HepG2 (cell line): ENCODE measurements at regions of chr5 and their contacts with region 1.

Region 1: DNA sequence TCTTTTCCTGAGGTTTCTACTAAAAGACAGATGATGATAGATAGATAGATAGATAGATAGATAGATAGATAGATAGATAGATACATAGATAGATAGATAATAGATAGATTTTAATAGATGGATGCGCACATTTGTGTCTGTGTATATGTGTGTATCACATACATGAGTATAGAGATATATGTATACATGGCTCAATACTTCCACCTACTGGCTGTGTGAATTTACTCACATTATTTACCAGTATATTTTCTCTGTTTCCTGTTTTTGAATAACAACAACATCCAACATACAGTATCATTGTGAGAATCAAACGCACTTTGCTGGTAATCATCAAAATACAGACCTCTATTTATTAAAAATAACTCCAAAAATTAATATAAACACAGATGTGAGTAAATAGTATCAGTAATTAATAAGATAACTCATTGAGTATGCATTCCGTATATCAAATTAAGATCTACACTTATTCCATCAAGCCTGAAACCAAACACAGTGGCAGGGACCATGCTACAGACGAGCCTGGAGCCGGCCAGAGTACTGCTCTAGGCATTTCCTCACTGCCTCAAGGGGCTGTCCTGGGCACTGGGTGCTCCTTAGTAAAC is 338.0 kb downstream of the SEMA5A start:
- DNase-seq: peak; percentile 34
- ATAC-seq: peak; percentile 72; the same call in 2 of the 3 replicates
- H3K4me3 ChIP-seq: no peak overlapping the region
- H3K27ac ChIP-seq: no peak overlapping the region
- H3K4me1 ChIP-seq: no peaks in the 10 kb centered on the region
- H3K27me3 ChIP-seq: no peaks in the 10 kb centered on the region
- CTCF ChIP-seq: peak; percentile 60
- EP300 ChIP-seq: no peak
- POLR2A ChIP-seq: no peak
- RAD21 ChIP-seq: no peak

Region 2: DNA sequence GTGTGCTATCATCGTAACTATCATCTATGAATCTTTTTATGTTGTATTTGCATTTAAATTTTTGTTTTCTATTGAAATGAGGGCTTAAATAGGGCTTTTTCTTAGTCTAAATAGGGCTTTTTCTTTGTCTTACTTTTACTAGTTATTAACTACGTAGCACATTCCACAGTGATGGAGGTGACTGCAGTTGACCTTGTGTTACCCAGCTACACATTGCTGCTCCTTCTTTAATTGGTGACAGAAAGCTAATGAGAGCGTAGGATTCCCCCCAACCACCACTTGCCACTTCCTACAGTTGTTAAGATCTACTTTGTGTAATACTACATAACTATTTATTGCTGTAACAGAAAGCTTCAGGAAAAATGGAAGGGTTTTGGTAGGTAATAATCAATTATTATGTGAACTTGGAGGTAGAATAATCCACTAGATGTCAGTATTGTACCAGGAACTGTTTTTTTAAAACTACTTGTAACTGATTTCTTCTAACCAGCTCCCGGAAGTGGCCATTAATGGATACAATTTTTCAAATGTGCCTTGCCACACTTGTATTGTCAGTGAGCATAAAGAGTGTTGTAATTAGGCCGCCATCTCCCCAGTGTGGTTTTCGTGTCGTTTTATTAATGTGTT is 1321.0 kb before region 1 on chr5:
- CTCF ChIA-PET with region 1: no interaction called
- POLR2A ChIA-PET with region 1: no interaction called
- in situ Hi-C with region 1: no loop called
- intact Hi-C with region 1: loop called (anchors 5 kb)
- DNase-seq: peak; percentile 20
- ATAC-seq: peak; percentile 35; the same call in 1 of the 3 replicates
- H3K4me3 ChIP-seq: no peak overlapping the region
- H3K27ac ChIP-seq: no peak overlapping the region
- H3K4me1 ChIP-seq: no peaks in the 10 kb centered on the region
- H3K27me3 ChIP-seq: no peaks in the 10 kb centered on the region
- CTCF ChIP-seq: peak; percentile 42
- EP300 ChIP-seq: no peak
- POLR2A ChIP-seq: no peak
- RAD21 ChIP-seq: no peak; the same call in 1 of the 2 replicates

Region 3: DNA sequence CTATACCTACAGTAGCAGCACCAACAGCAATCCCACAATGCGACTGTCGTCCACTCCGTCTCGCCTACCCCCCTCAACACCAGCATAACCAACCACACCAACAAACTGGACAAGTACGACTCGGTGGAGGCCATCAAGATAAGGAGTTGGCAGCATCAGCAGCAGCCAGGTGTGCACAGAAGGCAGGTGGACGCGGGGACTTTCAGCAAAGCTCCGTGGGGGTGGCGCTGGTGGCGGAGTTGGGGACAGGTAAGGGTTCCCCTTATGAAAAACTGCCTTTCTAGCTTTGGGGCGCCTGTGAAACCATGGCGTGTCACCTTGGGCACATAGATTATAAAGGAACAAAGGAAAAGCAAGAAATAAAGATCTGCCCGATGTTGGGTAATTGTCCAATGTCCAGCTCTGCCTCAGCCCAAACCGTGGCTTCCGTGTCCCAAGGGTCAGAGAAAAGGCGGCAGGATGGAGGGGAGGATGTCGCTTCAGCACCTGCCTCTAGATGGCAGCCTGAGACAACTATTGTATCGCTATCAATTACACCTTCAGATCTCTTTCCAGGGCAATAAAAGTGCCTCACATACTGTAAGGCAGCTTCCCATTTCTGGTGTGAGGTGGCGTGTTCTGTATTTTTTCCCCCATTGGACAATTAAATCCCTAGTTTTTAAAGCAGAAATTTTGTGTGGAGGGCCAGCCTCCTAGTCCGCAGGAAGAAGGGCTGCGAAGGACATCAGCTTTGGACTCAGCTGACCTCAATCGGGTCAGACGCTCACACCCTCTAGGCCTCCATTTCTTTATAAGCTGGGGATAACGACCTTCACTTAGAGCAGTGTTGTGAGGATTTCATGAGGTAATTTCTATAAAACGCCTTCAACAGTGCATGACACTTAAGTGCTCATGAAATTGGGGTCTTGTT is 1280.2 kb before region 1 on chr5:
- CTCF ChIA-PET with region 1: interaction called, 20 read pairs
- POLR2A ChIA-PET with region 1: no interaction called
- in situ Hi-C with region 1: loop called (anchors 5 kb)
- intact Hi-C with region 1: no loop called
- DNase-seq: peak; percentile 39
- ATAC-seq: peak; percentile 98
- H3K4me3 ChIP-seq: no peak overlapping the region
- H3K27ac ChIP-seq: no peak overlapping the region
- H3K4me1 ChIP-seq: no peaks in the 10 kb centered on the region
- H3K27me3 ChIP-seq: peaks cover 0 to 3% of the 10 kb centered on the region in 2 experiments; a peak in 1 of 5 replicates
- CTCF ChIP-seq: peak; percentile 90
- EP300 ChIP-seq: no peak
- POLR2A ChIP-seq: no peak
- RAD21 ChIP-seq: 0 out of 2 replicates have a peak, but pooled peaks have one; percentile 56

Region 4: GRCh38 chr5:8013948-8014710 is 1193.8 kb before region 1 on chr5:
- CTCF ChIA-PET with region 1: no interaction called
- POLR2A ChIA-PET with region 1: no interaction called
- in situ Hi-C with region 1: no loop called
- intact Hi-C with region 1: loop called (anchors 2 kb)
- DNase-seq: no peak
- ATAC-seq: no peak
- H3K4me3 ChIP-seq: no peak overlapping the region
- H3K27ac ChIP-seq: no peak overlapping the region
- H3K4me1 ChIP-seq: no peaks in the 10 kb centered on the region
- H3K27me3 ChIP-seq: no peaks in the 10 kb centered on the region
- CTCF ChIP-seq: no peak
- EP300 ChIP-seq: no peak
- POLR2A ChIP-seq: no peak
- RAD21 ChIP-seq: no peak

Region 5: DNA sequence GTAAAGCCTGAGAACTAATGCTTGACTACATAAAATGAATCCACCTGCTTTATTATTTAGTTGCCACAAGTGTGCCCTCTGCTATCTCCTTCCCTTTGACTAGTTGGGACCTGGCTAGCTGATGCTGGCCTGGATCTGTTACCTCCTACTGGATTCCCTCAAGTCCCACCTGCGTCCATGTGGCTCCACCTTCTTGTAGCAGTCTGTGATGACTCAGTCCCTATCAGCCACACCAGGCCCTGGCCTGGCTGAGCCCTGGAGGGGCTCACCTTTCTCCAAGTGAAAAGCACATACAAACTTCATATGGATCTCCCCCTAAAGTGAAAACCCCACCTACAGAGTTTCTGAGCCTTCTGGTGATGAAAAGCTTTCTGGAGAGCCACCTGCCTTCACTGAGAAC is 273.5 kb before region 1 on chr5:
- CTCF ChIA-PET with region 1: no interaction called
- POLR2A ChIA-PET with region 1: no interaction called
- in situ Hi-C with region 1: no loop called
- intact Hi-C with region 1: no loop called
- DNase-seq: no peak
- ATAC-seq: no peak
- H3K4me3 ChIP-seq: no peak overlapping the region
- H3K27ac ChIP-seq: no peak overlapping the region
- H3K4me1 ChIP-seq: no peaks in the 10 kb centered on the region
- H3K27me3 ChIP-seq: no peaks in the 10 kb centered on the region
- CTCF ChIP-seq: no peak
- EP300 ChIP-seq: no peak
- POLR2A ChIP-seq: no peak
- RAD21 ChIP-seq: no peak

Region 6: DNA sequence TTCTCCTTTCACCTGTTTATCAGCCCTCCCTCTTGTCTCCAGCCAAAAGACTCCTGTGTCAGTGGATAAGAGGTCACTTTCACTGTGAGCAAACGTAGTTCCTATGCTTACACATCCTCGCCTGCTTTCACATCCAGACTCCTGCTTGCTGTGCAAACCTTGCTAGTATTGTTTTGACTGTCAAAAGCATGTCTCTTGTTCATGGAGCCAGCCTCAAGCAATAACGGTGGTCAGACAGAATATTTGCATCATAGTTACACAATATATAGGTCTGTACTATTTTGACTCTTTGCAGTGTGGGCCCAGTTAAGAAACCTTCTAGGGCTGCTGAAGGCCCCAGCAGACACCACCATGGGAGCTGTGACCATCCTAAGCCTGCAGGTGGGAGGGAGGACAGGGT is 82.1 kb before region 1 on chr5:
- CTCF ChIA-PET with region 1: no interaction called
- POLR2A ChIA-PET with region 1: no interaction called
- in situ Hi-C with region 1: no loop called
- intact Hi-C with region 1: no loop called
- DNase-seq: no peak
- ATAC-seq: no peak
- H3K4me3 ChIP-seq: no peak overlapping the region
- H3K27ac ChIP-seq: no peak overlapping the region
- H3K4me1 ChIP-seq: no peaks in the 10 kb centered on the region
- H3K27me3 ChIP-seq: no peaks in the 10 kb centered on the region
- CTCF ChIP-seq: no peak
- EP300 ChIP-seq: no peak
- POLR2A ChIP-seq: no peak
- RAD21 ChIP-seq: no peak